ENCODE measurements at regions of chr7 and their contacts with region 1.

Region 1: GRCh38 chr7:151226875-151227782 is at the start of gene ABCF2:
- DNase-seq: peak; percentile 97
- ATAC-seq: peak; percentile 99
- H3K4me3 Mint-ChIP-seq: peak within 1 kb of the TSS; percentile 99
- H3K27ac Mint-ChIP-seq: peak within 1 kb of the TSS; percentile 91
- H3K4me1 Mint-ChIP-seq: peaks cover 41% of the 10 kb centered on the region
- H3K27me3 Mint-ChIP-seq: no peaks in the 10 kb centered on the region
- CTCF ChIP-seq: no peak
- total RNA-seq, gene ABCF2: 47.3 and 52.4 TPM in 2 replicates

Region 2: GRCh38 chr7:149297034-149297755 is 1929.9 kb before region 1 on chr7:
- CTCF ChIA-PET with region 1: no interaction called
- POLR2A ChIA-PET with region 1: no interaction called
- intact Hi-C with region 1: no loop called
- DNase-seq: no peak
- ATAC-seq: no peak
- H3K4me3 Mint-ChIP-seq: no peak overlapping the region
- H3K27ac Mint-ChIP-seq: no peak overlapping the region
- H3K4me1 Mint-ChIP-seq: peaks cover 2% of the 10 kb centered on the region
- H3K27me3 Mint-ChIP-seq: no peaks in the 10 kb centered on the region
- CTCF ChIP-seq: no peak

Region 3: DNA sequence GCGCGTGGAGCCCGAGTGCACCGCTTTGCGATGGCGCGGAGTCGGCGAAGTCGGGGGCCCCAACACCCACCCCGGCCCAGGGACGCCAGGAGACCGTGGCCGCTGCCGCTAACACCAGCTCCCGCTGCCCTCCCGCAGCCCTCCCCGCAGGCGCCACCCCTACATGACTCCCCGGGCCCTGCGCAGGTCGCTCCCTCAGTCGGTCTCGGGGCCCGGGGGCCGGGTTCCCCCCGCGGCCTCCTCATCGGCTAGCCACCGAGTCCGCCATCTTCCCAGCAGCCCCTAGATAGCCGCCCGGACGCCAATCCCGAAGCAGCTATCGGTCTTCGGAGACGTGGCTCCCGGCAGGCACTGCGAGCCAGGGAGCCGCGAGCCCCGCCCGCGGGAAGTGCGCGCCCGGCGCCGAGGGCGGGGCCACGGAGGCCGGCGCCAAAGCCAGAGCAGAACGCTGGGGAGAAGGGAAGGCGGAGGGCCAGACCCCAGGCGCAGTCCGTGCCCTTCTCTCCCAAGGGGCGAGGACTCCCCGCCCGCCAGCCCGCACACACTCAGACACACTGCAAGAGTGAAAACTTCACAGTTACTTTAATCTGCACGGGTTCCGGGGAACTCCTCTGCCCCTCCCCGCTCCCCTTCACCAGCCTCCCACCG is 146.5 kb before region 1 on chr7 and contains the start of gene FASTK:
- CTCF ChIA-PET with region 1: no interaction called
- POLR2A ChIA-PET with region 1: interaction called, 4 read pairs
- intact Hi-C with region 1: loop called (anchors 2 kb)
- DNase-seq: peak; percentile 81
- ATAC-seq: peak; percentile 83
- H3K4me3 Mint-ChIP-seq: peak within 1 kb of the TSS; percentile 91
- H3K27ac Mint-ChIP-seq: peak within 1 kb of the TSS; percentile 70
- H3K4me1 Mint-ChIP-seq: peaks cover 49% of the 10 kb centered on the region
- H3K27me3 Mint-ChIP-seq: peaks cover 8% of the 10 kb centered on the region
- CTCF ChIP-seq: no peak
- total RNA-seq, gene FASTK: 97.6 and 103 TPM in 2 replicates

Measured in activated B cell treated with CpG ODN at 0.5 μM for 24 hours (primary cell).